Endothelial cell of umbilical vein (primary cell): ENCODE measurements at regions of chr15 and their contacts with region 1.

Region 1: DNA sequence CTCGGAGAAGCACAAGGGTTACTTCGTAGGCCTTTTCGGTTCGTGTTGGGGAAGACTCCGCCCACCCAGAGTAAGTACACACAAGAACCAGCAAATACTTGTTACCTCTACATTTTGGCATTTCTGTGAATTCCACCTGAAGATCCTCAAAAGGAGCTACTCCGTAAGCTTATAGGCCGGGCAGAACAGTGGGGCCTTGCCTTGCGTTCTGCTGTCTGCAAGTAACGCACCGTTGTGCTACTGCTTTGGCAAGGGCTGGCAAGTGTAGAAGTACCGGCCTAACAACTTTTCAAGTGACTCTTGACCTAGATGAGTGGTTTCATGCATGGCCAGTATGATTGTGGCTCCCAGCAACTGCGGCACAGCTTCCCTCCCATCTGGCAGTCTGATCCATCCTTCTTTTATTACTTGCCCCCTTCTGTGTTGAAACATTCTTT is 6.4 kb upstream of the DNAAF4 start:
- DNase-seq: no peak
- H3K4me3 ChIP-seq: no peak overlapping the region
- H3K27ac ChIP-seq: no peak overlapping the region
- H3K4me1 ChIP-seq: no peaks in the 10 kb centered on the region
- H3K27me3 ChIP-seq: no peaks in the 10 kb centered on the region
- CTCF ChIP-seq: no peak
- POLR2A ChIP-seq: no peak

Region 2: GRCh38 chr15:55562601-55563000 is 48.2 kb after region 1 on chr15:
- CTCF ChIA-PET with region 1: no interaction called
- POLR2A ChIA-PET with region 1: no interaction called
- dilution Hi-C with region 1: no loop called
- intact Hi-C with region 1: no loop called
- DNase-seq: no peak
- H3K4me3 ChIP-seq: no peak overlapping the region
- H3K27ac ChIP-seq: no peak overlapping the region
- H3K4me1 ChIP-seq: no peaks in the 10 kb centered on the region
- H3K27me3 ChIP-seq: no peaks in the 10 kb centered on the region
- CTCF ChIP-seq: no peak
- POLR2A ChIP-seq: no peak

Region 3: GRCh38 chr15:55637086-55637485 is 122.7 kb after region 1 on chr15:
- CTCF ChIA-PET with region 1: interaction called, 12 read pairs
- POLR2A ChIA-PET with region 1: no interaction called
- dilution Hi-C with region 1: no loop called
- intact Hi-C with region 1: no loop called
- DNase-seq: no peak
- H3K4me3 ChIP-seq: no peak overlapping the region
- H3K27ac ChIP-seq: no peak overlapping the region
- H3K4me1 ChIP-seq: no peaks in the 10 kb centered on the region
- H3K27me3 ChIP-seq: no peaks in the 10 kb centered on the region
- CTCF ChIP-seq: no peak
- POLR2A ChIP-seq: no peak